ENCODE measurements at regions of chr3 and their contacts with region 1.

Region 1: GRCh38 chr3:114863848-114864247 is 283.2 kb downstream of the ZBTB20 start:
- DNase-seq: no peak
- H3K4me3 ChIP-seq: peak overlapping the region in 1 of 2 donors; percentile 19
- H3K27ac ChIP-seq: no peak overlapping the region
- H3K4me1 ChIP-seq: peaks cover 8% of the 10 kb centered on the region
- H3K27me3 ChIP-seq: no peaks in the 10 kb centered on the region
- CTCF ChIP-seq: no peak
- POLR2A ChIP-seq: no peak

Region 2: GRCh38 chr3:114839476-114839875 is 24.4 kb before region 1 on chr3:
- intact Hi-C with region 1: loop called (anchors 1 kb)
- DNase-seq: no peak
- H3K4me3 ChIP-seq: no peak overlapping the region
- H3K27ac ChIP-seq: no peak overlapping the region
- H3K4me1 ChIP-seq: no peaks in the 10 kb centered on the region
- H3K27me3 ChIP-seq: no peaks in the 10 kb centered on the region
- CTCF ChIP-seq: no peak
- POLR2A ChIP-seq: no peak